ENCODE measurements at regions of chr11 and their contacts with region 1.

Region 1: GRCh38 chr11:117807482-117808327 is 10.7 kb upstream of the DSCAML1 start:
- DNase-seq: peak; percentile 70
- H3K4me3 Mint-ChIP-seq: no peak overlapping the region
- H3K27ac Mint-ChIP-seq: no peak overlapping the region
- H3K4me1 Mint-ChIP-seq: peaks cover 23% of the 10 kb centered on the region
- H3K27me3 Mint-ChIP-seq: peaks cover 14% of the 10 kb centered on the region
- CTCF ChIP-seq: peak; percentile 67

Region 2: DNA sequence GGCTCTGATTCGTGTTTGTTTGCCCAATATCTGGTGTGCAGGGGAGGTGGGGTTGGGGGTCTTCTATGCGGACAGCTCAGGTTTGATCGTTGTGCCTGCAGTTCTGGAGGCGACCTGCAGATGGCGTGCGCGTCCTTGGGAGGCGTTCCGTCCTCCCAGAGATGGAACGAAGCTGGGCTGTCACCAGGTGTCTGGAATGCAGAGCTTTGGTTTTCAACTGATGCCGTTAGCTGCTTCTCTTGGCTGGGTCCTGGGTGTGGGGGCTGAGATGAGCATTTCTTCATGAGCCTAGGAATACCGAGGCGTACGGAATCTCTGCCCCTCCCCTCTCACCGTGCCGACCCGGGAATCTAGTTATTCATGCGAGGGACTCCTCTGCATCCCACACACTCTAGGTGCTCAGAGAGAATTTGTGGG is 381.4 kb before region 1 on chr11:
- CTCF ChIA-PET with region 1: interaction called, 26 read pairs
- intact Hi-C with region 1: no loop called
- DNase-seq: peak; percentile 67
- H3K4me3 Mint-ChIP-seq: no peak overlapping the region
- H3K27ac Mint-ChIP-seq: no peak overlapping the region
- H3K4me1 Mint-ChIP-seq: no peaks in the 10 kb centered on the region
- H3K27me3 Mint-ChIP-seq: peaks cover 77% of the 10 kb centered on the region
- CTCF ChIP-seq: peak; percentile 87

Region 3: DNA sequence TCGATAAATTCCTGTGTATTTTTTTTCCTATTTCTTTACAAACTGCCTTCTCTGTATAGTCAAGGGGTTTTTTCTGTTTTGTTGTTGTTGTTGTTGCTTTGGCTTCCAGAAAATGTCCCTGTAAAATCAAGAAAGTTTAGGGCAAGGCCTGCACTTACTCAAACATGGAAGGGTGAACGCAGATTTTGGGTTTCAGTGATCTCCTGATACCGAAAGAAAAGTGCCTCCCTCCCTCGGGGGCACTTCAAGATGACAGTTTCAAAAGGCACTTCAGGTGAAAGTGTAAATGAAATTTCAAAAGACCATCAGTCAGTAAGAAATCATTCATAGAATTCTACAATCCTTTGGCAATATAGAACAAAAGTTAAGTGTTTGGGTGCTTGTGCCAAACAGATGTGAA is 225.7 kb after region 1 on chr11:
- CTCF ChIA-PET with region 1: no interaction called
- intact Hi-C with region 1: no loop called
- DNase-seq: no peak
- H3K4me3 Mint-ChIP-seq: no peak overlapping the region
- H3K27ac Mint-ChIP-seq: no peak overlapping the region
- H3K4me1 Mint-ChIP-seq: no peaks in the 10 kb centered on the region
- H3K27me3 Mint-ChIP-seq: peaks cover 41% of the 10 kb centered on the region
- CTCF ChIP-seq: no peak

Region 4: GRCh38 chr11:118051611-118052461 is 244.1 kb after region 1 on chr11:
- CTCF ChIA-PET with region 1: interaction called, 11 read pairs
- intact Hi-C with region 1: no loop called
- DNase-seq: no peak
- H3K4me3 Mint-ChIP-seq: no peak overlapping the region
- H3K27ac Mint-ChIP-seq: no peak overlapping the region
- H3K4me1 Mint-ChIP-seq: no peaks in the 10 kb centered on the region
- H3K27me3 Mint-ChIP-seq: peaks cover 21% of the 10 kb centered on the region
- CTCF ChIP-seq: no peak

Measured in Calu3 (cell line).